Caco-2 (cell line): ENCODE measurements at regions of chr11 and their contacts with region 1.

Region 1: DNA sequence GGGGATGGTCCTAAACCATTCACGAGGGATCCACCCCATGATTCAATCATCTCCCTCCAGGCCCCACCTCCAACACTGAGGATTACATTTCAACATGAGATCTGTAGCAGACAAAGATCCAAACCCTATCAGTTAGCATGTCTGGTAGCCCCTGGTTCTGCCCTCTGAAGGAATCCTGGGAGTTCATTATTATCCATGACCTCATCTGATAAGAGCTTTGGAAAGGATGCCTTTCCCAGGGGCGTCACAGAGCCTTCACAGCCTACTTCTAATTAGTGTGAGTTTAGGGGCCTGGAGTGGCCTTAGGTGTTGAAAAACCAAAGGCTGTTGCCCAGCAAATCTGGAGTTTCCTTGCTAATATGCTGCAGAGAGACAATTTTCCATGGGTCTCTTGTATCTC is 8.6 kb upstream of the EIF3M start:
- DNase-seq: peak; percentile 12 to 49
- H3K4me3 ChIP-seq: no peak overlapping the region
- H3K4me3 Mint-ChIP-seq: no peak overlapping the region
- H3K27ac Mint-ChIP-seq: peak overlapping the region; percentile 87
- H3K4me1 ChIP-seq: peaks cover 16% of the 10 kb centered on the region
- H3K4me1 Mint-ChIP-seq: peaks cover 18% of the 10 kb centered on the region
- H3K27me3 ChIP-seq: no peaks in the 10 kb centered on the region
- H3K27me3 Mint-ChIP-seq: no peaks in the 10 kb centered on the region
- CTCF ChIP-seq: no peak

Region 2: GRCh38 chr11:32439501-32440210 is 135.4 kb before region 1 on chr11:
- CTCF ChIA-PET with region 1: no interaction called
- POLR2A ChIA-PET with region 1: no interaction called
- intact Hi-C with region 1: loop called (anchors 5 kb)
- DNase-seq: no peak
- H3K4me3 ChIP-seq: no peak overlapping the region
- H3K4me3 Mint-ChIP-seq: no peak overlapping the region
- H3K27ac Mint-ChIP-seq: no peak overlapping the region
- H3K4me1 ChIP-seq: no peaks in the 10 kb centered on the region
- H3K4me1 Mint-ChIP-seq: no peaks in the 10 kb centered on the region
- H3K27me3 ChIP-seq: no peaks in the 10 kb centered on the region; the same call in 1 of the 2 replicates
- H3K27me3 Mint-ChIP-seq: peaks cover 11% of the 10 kb centered on the region
- CTCF ChIP-seq: no peak

Region 3: DNA sequence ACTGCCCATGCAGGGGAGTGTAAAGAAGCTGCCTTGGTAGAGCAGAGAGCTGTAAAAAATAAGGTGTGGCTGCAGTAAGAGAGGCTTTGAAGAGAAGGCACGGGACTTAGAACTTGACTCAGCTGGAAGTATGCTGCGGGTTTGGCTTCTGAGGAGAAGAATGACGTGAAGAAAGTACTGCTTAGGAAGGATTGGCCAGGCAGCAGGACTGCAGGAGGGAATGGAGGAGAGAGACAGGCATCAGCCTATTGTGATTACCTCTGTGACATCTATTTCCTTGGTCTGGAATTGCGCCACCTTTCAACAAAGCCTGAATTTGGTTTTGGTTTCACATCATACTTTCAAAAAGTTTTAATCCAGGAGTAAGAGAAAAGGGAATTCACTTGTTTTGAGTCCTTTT is 277.1 kb after region 1 on chr11:
- CTCF ChIA-PET with region 1: no interaction called
- POLR2A ChIA-PET with region 1: no interaction called
- intact Hi-C with region 1: no loop called
- DNase-seq: no peak
- H3K4me3 ChIP-seq: no peak overlapping the region
- H3K4me3 Mint-ChIP-seq: no peak overlapping the region
- H3K27ac Mint-ChIP-seq: no peak overlapping the region
- H3K4me1 ChIP-seq: no peaks in the 10 kb centered on the region
- H3K4me1 Mint-ChIP-seq: no peaks in the 10 kb centered on the region
- H3K27me3 ChIP-seq: no peaks in the 10 kb centered on the region
- H3K27me3 Mint-ChIP-seq: no peaks in the 10 kb centered on the region
- CTCF ChIP-seq: no peak